ENCODE measurements at regions of chr1 and their contacts with region 1.

Region 1: DNA sequence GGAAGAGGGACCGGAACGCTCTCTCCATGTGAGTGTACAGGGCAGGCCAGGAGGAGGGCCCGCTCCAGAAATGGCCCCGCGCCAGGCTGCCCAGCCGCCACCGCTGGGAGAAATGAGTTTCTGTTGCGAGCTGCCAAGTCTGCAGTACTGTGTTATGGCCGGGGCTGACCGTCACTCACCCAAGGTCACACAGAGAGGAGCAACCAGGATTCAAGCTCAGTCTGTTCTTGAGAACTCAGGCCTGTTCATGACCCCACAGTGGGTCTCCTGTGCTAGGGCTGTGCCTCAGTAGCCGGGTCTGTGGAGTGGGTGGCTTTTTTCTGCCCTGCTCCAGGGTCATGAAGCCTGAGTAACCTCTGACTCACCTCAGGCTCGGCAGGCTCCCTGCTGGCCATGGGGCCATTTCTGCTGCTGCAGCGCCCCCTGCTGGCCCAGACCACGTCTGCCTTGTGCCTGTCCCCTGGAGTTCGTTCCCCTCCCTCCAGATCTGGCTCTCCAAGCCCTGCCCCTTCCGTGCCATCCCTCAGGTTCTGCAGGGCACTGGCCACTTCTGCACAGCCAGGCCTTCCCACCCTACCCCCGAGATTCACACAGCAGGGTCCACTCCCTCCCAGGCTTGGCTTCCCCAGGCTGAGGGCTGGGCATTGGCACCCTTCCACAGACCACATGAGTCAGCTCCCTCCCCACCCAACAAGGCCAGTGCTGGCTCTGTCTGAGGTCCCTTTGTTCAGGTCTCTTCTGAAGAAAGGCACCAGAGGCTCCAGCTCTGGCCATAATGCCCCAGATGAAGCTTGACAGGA is 51.8 kb downstream of the EDN2 start:
- DNase-seq: peak; percentile 52 to 96
- H3K4me3 ChIP-seq: peak overlapping the region; percentile 0 to 13
- H3K27ac ChIP-seq: peak overlapping the region; percentile 46 to 63
- H3K4me1 ChIP-seq: peaks cover 23 to 32% of the 10 kb centered on the region in 2 donors
- H3K27me3 ChIP-seq: no peaks in the 10 kb centered on the region
- CTCF ChIP-seq: peak; percentile 90 to 98 (median 97)

Region 2: GRCh38 chr1:41282679-41283317 is 149.9 kb before region 1 on chr1:
- intact Hi-C with region 1: loop called (anchors 2 kb)
- DNase-seq: no peak
- H3K4me3 ChIP-seq: no peak overlapping the region
- H3K27ac ChIP-seq: no peak overlapping the region
- H3K4me1 ChIP-seq: peaks cover 0 to 2% of the 10 kb centered on the region in 2 donors
- H3K27me3 ChIP-seq: no peaks in the 10 kb centered on the region
- CTCF ChIP-seq: peak; percentile 64 to 82 (median 81)

Region 3: GRCh38 chr1:41751804-41752513 is 319.3 kb after region 1 on chr1:
- intact Hi-C with region 1: no loop called
- DNase-seq: no peak
- H3K4me3 ChIP-seq: no peak overlapping the region
- H3K27ac ChIP-seq: no peak overlapping the region
- H3K4me1 ChIP-seq: no peaks in the 10 kb centered on the region
- H3K27me3 ChIP-seq: no peaks in the 10 kb centered on the region
- CTCF ChIP-seq: no peak